Calu3 (cell line): ENCODE measurements at regions of chr12 and their contacts with region 1.

Region 1: DNA sequence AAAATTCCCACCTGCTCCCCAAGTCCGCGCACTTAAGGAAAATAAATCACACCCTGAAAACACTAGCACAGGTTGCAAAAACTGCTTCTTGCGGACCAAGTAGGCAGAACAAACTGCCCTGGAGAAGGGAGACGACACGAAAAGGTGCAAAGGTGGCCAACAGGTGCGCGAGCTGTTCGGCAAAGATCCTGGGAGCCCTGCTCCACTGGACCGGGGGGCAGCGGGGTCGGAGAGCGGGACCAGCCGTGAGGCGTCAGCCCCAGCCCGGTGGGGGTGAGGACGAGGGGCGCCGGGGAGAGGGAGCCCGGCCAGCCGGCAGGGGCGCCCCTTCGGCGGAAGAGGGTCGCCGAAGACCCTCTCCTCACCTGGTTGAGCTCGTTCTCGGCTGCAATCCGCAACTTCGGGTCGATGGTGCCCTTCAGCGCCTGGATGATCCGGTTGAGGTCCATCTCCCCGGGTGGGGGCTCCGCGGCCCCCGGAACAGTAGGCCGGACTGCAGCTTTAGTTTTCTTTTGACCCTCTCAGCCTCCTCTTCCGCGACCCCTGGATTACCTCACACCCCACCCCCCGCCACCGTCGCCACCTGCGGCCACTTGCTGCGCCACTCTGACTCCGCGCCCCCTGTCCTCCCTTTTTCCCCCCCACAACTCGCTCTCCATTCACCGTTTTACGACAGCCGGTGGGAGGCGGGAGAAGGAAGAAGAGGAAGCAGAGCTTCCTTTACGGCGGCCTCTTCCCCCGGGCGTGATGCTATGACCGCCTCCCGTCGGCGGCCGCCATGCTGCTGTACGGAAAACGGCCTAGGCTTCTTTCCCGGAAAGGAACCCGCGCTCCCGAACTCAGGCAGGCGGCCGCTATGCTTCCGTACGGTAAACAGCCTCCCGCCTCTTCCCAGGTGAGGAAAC is at the start of gene IPO8:
- DNase-seq: peak; percentile 90
- H3K4me3 Mint-ChIP-seq: peak within 1 kb of the TSS; percentile 88
- H3K27ac Mint-ChIP-seq: peak within 1 kb of the TSS; percentile 74
- H3K4me1 Mint-ChIP-seq: peaks cover 28% of the 10 kb centered on the region
- H3K27me3 Mint-ChIP-seq: no peaks in the 10 kb centered on the region
- CTCF ChIP-seq: peak; percentile 36
- total RNA-seq, gene IPO8: 40.1 and 44.1 TPM in 2 replicates

Region 2: GRCh38 chr12:30725739-30726138 is 30.3 kb after region 1 on chr12:
- CTCF ChIA-PET with region 1: interaction called, 19 read pairs
- intact Hi-C with region 1: no loop called
- DNase-seq: peak; percentile 3
- H3K4me3 Mint-ChIP-seq: no peak overlapping the region
- H3K27ac Mint-ChIP-seq: peak overlapping the region; percentile 20
- H3K4me1 Mint-ChIP-seq: peaks cover 15% of the 10 kb centered on the region
- H3K27me3 Mint-ChIP-seq: no peaks in the 10 kb centered on the region
- CTCF ChIP-seq: no peak

Region 3: DNA sequence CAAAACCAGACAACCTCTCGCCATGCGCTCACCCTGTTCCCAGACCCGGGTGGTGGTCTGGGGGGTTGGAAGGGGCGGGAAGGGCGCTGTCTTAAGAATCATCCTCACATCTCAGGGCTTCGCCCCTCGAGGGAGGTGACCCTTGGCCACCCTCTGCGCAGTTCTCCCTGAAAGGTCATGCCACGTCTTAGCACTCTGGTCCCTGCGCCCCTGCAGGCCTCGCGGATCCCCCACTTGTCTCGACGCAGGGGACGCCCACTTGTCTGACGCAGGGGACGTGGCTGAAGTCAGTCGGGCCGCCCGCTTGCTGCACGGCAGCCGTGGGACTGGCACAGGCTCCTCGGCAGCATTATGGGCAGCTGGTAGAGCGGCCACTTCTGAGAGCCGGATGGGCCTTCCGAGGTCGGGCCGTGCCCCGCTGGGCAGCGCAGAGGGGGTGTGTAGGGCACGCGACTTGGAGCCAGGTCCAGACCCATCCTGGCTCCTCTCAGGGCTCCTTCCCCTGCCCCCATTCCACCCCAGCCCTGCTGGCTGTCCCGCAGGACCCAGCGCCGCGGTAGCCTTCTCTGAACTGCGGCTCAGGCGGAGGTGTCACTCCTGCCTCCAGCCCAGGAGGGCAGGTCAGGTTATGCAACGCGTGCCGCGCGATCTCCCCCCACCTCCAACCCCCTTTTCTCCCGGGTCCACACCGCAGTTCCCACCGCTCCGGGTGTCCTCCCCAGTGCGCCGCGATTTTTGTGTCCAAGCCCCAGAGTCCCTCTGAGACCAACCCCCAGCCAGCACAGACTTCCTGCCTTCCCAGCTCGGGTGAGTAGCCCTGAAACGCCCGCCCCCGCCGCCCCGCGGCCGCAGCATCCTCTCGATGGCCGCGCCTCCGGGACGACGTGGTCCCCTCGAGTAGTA is 100.2 kb after region 1 on chr12:
- CTCF ChIA-PET with region 1: interaction called, 16 read pairs
- intact Hi-C with region 1: loop called (anchors 2 kb)
- DNase-seq: peak; percentile 85
- H3K4me3 Mint-ChIP-seq: peak overlapping the region; percentile 89
- H3K27ac Mint-ChIP-seq: peak overlapping the region; percentile 89
- H3K4me1 Mint-ChIP-seq: peaks cover 51% of the 10 kb centered on the region
- H3K27me3 Mint-ChIP-seq: no peaks in the 10 kb centered on the region
- CTCF ChIP-seq: no peak